ENCODE measurements at regions of chr2 and their contacts with region 1.

Region 1: GRCh38 chr2:69306822-69307578 is 80.0 kb downstream of the GFPT1 start:
- DNase-seq: peak; percentile 77 to 85
- ATAC-seq: peak; percentile 66

Region 2: DNA sequence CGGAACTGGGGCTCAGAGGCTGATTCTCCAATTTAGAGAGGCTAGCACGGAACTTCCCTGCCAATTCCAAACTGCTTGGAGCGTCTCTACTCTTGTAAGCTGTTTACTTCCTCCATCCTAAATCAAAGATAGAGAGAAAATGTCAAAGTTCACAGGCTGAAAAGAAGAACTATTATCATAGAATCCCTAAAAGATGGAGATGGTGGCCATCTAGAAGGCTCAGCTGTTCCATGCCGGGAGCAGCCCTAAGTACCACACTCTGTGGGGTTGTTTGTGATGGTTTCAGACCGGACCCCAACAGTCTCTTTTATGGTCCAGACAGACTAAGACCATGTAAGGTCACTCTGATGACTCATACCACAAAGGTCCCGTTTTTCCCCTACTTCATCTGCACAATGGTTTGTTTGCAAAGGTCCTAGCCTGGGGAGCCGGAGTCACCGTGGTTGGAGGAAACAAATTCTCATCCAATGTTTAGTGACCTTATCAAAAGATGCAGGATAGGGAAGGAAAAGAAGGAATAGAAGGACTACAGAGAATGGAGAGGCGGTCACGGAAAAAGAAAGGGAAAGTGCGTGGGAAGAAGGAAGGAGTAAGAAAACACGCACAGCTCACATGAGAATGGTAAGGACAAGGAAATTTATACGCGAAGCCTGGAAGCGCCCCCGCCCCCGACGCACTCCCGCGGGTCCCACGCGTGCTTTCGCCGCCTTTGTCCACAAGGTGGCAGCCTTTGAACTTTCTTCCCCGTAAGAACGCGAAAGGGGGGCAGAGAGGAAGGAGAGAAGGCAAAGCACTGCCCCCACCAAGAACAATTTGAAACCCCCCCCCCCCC is 294.5 kb before region 1 on chr2:
- intact Hi-C with region 1: no loop called
- DNase-seq: peak; percentile 49 to 71
- ATAC-seq: peak; percentile 49

Region 3: DNA sequence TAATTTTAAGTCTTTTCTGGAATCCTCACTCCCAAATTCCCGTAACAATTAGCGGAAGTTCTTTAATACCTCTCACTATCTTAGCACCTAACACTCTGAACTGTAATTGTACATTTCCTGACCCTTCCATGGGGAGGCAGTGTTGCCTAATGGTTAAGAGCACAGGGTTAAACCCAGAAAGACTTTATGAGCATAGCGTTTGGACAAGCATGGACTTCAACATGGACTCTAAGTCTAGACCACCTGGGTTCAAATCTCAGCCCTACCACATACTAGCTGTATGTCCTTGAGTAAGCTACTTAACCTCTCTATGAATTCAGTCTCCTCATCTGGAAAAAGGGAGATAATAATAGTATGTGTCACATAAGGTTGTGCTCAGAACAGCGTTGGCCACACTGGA is 281.0 kb before region 1 on chr2:
- intact Hi-C with region 1: loop called in 1 of 2 experiments (anchors 5 kb)
- DNase-seq: peak in 1 of 2 donors; percentile 24
- ATAC-seq: peak; percentile 94